ENCODE measurements at regions of chr7 and their contacts with region 1.

Region 1: GRCh38 chr7:130758429-130759056 is 24.5 kb upstream of the KLF14 start:
- DNase-seq: no peak
- ATAC-seq: no peak
- H3K4me3 Mint-ChIP-seq: no peak overlapping the region
- H3K27ac Mint-ChIP-seq: no peak overlapping the region
- H3K4me1 Mint-ChIP-seq: no peaks in the 10 kb centered on the region
- H3K27me3 Mint-ChIP-seq: peaks cover 2% of the 10 kb centered on the region
- CTCF ChIP-seq: peak; percentile 92

Region 2: GRCh38 chr7:130205084-130205947 is 553.2 kb before region 1 on chr7 and contains the start of gene TMEM209:
- CTCF ChIA-PET with region 1: interaction called, 10 read pairs
- POLR2A ChIA-PET with region 1: no interaction called
- intact Hi-C with region 1: no loop called
- DNase-seq: peak; percentile 96
- ATAC-seq: peak; percentile 99
- H3K4me3 Mint-ChIP-seq: peak within 1 kb of the TSS; percentile 91
- H3K27ac Mint-ChIP-seq: peak within 1 kb of the TSS; percentile 100
- H3K4me1 Mint-ChIP-seq: peaks cover 30% of the 10 kb centered on the region
- H3K27me3 Mint-ChIP-seq: no peaks in the 10 kb centered on the region
- CTCF ChIP-seq: no peak
- total RNA-seq, gene TMEM209: 36.1 to 45.6 TPM

Region 3: DNA sequence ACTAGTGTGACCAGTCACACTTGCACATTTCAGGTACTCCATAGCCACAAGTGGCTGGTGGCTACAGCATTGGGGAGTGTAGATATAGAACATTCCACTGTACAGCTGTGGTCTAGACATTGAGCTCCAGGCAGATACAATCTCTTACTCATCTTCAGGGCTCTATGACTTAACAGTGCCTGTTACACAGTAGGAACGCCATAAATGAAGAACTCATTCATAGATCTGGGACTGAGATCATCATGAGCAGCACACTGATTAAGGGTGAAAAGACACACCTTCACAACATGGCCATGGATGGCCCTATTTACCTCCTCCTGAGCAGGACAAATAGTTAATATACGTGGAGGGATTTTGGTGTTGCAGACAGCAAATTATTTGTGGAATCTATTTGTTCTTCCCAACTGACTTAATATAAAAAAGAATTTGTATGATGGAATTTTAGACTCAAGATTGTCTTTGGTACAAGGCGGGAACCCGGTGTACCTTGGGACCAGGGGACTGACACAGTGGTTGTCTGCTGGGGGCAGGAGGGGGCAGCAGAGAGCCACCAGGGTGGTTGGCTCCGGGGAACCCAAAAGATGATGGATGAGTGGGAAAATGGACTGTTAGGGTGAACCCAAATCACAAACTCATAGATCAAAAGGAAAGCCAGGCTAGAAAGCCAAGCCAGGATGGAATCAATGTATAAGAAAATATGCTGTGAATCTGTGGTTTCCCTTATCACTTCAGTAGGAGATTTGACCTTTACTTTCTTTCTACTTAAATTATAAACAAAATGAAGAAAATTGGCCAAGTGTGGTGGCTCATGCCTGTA is 516.1 kb before region 1 on chr7:
- CTCF ChIA-PET with region 1: interaction called, 8 read pairs
- POLR2A ChIA-PET with region 1: no interaction called
- intact Hi-C with region 1: loop called (anchors 10 kb)
- DNase-seq: peak; percentile 72
- ATAC-seq: peak; percentile 84
- H3K4me3 Mint-ChIP-seq: no peak overlapping the region
- H3K27ac Mint-ChIP-seq: no peak overlapping the region
- H3K4me1 Mint-ChIP-seq: peaks cover 8% of the 10 kb centered on the region
- H3K27me3 Mint-ChIP-seq: no peaks in the 10 kb centered on the region
- CTCF ChIP-seq: peak; percentile 90